GM12878 (cell line): ENCODE measurements at regions of chr9 and their contacts with region 1.

Region 1: DNA sequence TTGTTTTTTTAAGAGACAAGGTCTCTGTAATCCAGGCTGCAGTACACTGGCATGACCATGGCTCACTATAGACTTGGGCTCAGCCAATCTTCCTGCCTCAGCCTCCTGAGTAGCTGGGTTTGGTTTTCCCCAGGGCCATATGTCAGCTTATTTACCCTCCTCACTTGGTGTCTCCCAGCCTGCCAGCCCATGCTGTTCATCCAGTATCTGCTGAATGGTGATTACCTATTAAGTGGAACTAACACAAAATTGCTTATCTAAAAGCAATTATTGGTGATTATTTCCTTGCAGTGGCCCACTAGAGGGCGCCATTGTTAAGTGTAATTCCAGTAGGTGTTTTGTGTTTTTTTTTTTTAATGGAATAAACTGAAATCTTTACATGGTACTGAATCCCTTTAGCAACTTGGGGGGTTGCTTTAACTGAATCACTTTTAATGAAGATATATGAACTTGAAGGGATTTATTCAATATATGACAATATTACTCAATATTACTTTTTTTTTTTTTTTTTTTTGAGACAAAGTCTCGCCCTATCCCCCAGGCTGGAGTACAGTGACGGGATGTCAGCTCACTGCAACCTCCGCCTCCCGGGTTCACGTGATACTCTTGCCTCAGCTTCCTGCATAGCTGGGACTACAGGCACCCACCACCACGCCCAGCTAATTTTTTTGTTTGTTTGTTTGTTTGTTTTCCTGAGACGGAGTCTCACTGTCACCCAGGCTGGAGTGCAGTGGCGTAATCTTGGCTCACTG is 13.8 kb downstream of the EXOSC2 start:
- DNase-seq: no peak
- ATAC-seq: peak; percentile 70
- H3K4me3 ChIP-seq: no peak overlapping the region
- H3K27ac ChIP-seq: no peak overlapping the region
- H3K4me1 ChIP-seq: no peaks in the 10 kb centered on the region
- H3K27me3 ChIP-seq: no peaks in the 10 kb centered on the region
- CTCF ChIP-seq: peak; percentile 47 to 81 (median 73)
- EP300 ChIP-seq: no peak
- POLR2A ChIP-seq: no peak
- RAD21 ChIP-seq: peak; percentile 84

Region 2: GRCh38 chr9:130688072-130688471 is 19.3 kb before region 1 on chr9:
- CTCF ChIA-PET with region 1: interaction called, 47 read pairs
- POLR2A ChIA-PET with region 1: no interaction called
- RAD21 ChIA-PET with region 1: interaction called, 4 read pairs
- SMC1A ChIA-PET with region 1: no interaction called
- in situ Hi-C with region 1: no loop called
- intact Hi-C with region 1: no loop called
- DNase-seq: no peak
- ATAC-seq: no peak
- H3K4me3 ChIP-seq: no peak overlapping the region
- H3K27ac ChIP-seq: no peak overlapping the region
- H3K4me1 ChIP-seq: peaks cover 3% of the 10 kb centered on the region; the same call in 1 of the 2 replicates
- H3K27me3 ChIP-seq: peaks cover 0 to 2% of the 10 kb centered on the region in 2 experiments; a peak in 1 of 4 replicates
- CTCF ChIP-seq: no peak
- EP300 ChIP-seq: no peak
- POLR2A ChIP-seq: no peak
- RAD21 ChIP-seq: no peak

Region 3: DNA sequence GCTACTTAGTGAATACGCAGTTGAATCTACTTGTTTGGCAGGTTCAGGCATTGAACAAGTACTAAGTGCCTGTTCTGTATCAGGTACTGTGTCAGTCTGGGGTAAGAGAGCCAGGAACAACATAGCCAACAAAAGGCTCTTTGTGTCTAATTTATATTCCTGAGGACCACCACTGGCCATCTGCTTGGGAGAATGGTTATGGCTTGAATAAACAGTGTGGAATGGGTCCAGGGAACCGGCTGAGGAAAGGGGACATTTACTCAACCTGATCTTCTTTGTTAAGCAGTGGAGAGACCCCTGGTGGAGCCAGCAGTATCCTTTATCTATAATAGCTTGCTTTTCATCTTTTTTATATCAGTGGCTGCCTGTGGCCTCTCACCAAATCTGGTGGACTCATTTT is 24.7 kb after region 1 on chr9:
- CTCF ChIA-PET with region 1: interaction called, 12 read pairs
- POLR2A ChIA-PET with region 1: no interaction called
- RAD21 ChIA-PET with region 1: no interaction called
- SMC1A ChIA-PET with region 1: no interaction called
- in situ Hi-C with region 1: no loop called
- intact Hi-C with region 1: no loop called
- DNase-seq: no peak
- ATAC-seq: 0 out of 3 replicates have a peak, but pooled peaks have one; percentile 21
- H3K4me3 ChIP-seq: no peak overlapping the region
- H3K27ac ChIP-seq: no peak overlapping the region
- H3K4me1 ChIP-seq: no peaks in the 10 kb centered on the region
- H3K27me3 ChIP-seq: no peaks in the 10 kb centered on the region
- CTCF ChIP-seq: no peak
- EP300 ChIP-seq: no peak
- POLR2A ChIP-seq: no peak
- RAD21 ChIP-seq: no peak

Region 4: DNA sequence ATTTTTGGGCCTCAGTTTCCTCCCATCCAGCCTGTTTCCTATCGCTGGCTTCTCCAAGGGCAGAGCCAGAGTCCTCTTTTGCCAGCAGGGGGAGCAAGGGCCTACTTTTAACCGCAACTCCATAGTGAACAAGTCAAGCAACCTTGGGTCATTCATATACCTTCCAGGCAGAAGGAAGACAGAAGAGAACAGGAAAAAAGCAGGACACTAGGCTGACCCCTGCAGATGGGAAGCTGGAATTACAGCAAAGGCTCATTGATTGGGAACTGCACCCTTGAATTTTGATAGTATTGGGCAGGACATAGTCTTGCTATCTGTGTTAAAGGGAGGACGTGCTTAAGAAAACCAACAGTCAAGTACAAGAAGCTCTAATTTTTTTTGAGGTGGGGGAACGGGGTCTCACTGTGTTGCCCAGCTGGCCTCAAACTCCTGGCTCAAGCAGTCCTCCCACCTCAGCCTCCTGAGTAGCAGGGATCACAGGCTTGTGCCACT is 159.1 kb after region 1 on chr9:
- CTCF ChIA-PET with region 1: interaction called, 267 read pairs
- POLR2A ChIA-PET with region 1: no interaction called
- RAD21 ChIA-PET with region 1: interaction called, 15 read pairs
- SMC1A ChIA-PET with region 1: interaction called, 21 read pairs
- in situ Hi-C with region 1: loop called (anchors 5 kb)
- intact Hi-C with region 1: loop called (anchors 1 kb)
- DNase-seq: peak; percentile 17
- ATAC-seq: peak; percentile 50
- H3K4me3 ChIP-seq: no peak overlapping the region
- H3K27ac ChIP-seq: no peak overlapping the region
- H3K4me1 ChIP-seq: peaks cover 19% of the 10 kb centered on the region
- H3K27me3 ChIP-seq: no peaks in the 10 kb centered on the region
- CTCF ChIP-seq: peak; percentile 67 to 79 (median 78)
- EP300 ChIP-seq: no peak
- POLR2A ChIP-seq: no peak
- RAD21 ChIP-seq: peak; percentile 57

Region 5: GRCh38 chr9:131046581-131047202 is 339.3 kb after region 1 on chr9:
- CTCF ChIA-PET with region 1: interaction called, 16 read pairs
- POLR2A ChIA-PET with region 1: interaction called, 3 read pairs
- RAD21 ChIA-PET with region 1: interaction called, 7 read pairs
- SMC1A ChIA-PET with region 1: no interaction called
- in situ Hi-C with region 1: loop called (anchors 5 kb)
- intact Hi-C with region 1: loop called (anchors 5 kb)
- DNase-seq: no peak
- ATAC-seq: peak; percentile 96
- H3K4me3 ChIP-seq: no peak overlapping the region
- H3K27ac ChIP-seq: no peak overlapping the region
- H3K4me1 ChIP-seq: peaks cover 13% of the 10 kb centered on the region
- H3K27me3 ChIP-seq: no peaks in the 10 kb centered on the region
- CTCF ChIP-seq: peak; percentile 92 to 95 (median 92)
- EP300 ChIP-seq: no peak
- POLR2A ChIP-seq: no peak
- RAD21 ChIP-seq: peak; percentile 94